ENCODE measurements at regions of chr13 and their contacts with region 1.

Region 1: DNA sequence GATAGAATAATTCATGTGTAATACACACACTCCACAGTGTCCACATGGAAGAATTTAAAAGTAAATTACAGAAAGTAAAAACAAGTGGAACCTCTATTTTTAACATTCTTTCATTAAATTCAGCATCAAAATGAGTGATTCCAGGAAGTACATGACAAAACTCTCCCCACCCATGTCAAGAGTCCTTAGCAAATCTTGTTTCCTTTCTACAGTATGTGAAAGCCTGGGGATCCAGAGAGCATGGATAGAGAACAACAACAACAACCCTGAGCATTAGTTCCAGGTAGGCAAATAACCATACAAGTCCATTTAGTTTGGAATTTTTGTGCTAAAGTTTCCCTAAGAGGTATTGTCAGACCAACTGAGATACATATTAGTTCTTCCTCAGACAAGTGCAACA is 267.9 kb downstream of the ENOX1 start:
- DNase-seq: no peak
- H3K4me3 Mint-ChIP-seq: no peak overlapping the region
- H3K27ac Mint-ChIP-seq: no peak overlapping the region
- H3K4me1 Mint-ChIP-seq: no peaks in the 10 kb centered on the region
- H3K27me3 Mint-ChIP-seq: peaks cover 4% of the 10 kb centered on the region

Region 2: DNA sequence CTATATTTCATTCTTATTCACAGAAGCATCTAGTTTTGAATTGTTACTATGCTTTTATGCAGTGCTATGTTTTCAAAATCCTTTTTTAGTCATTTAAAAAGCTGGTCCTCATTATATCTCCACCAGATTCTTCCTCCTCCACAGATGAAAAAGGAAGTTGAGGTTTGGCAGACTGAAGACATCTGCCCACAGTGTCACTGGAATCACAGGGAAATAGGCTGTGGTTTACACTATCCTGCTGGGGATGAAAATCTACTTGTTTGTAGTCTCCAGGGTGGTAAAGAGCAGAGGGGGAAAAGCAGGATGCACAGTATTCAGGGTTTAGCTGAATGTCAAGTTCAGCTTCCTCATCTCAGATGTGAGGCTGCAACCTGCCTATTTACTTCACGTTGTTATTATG is 144.2 kb before region 1 on chr13:
- intact Hi-C with region 1: no loop called
- DNase-seq: no peak
- H3K4me3 Mint-ChIP-seq: no peak overlapping the region
- H3K27ac Mint-ChIP-seq: no peak overlapping the region
- H3K4me1 Mint-ChIP-seq: peaks cover 2% of the 10 kb centered on the region
- H3K27me3 Mint-ChIP-seq: peaks cover 31% of the 10 kb centered on the region

Region 3: DNA sequence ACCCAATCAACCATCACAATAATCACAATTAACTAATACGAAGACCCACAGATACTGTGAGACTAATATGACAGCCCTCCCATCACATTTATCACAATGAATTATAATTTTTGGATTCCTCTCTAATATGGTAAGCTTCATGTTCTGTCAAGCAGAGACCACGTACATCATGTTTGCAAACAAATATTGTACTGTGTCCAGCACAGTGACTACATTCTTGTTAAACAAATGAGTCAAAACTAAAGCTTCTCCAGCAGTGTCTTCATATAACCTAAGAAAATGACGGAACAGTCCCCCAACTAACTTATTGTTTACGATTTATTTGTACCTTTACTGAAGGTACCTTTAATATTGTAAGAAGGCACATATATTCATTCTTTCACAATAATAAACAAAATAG is 24.6 kb before region 1 on chr13:
- intact Hi-C with region 1: loop called (anchors 1 kb)
- DNase-seq: no peak
- H3K4me3 Mint-ChIP-seq: no peak overlapping the region
- H3K27ac Mint-ChIP-seq: no peak overlapping the region
- H3K4me1 Mint-ChIP-seq: no peaks in the 10 kb centered on the region
- H3K27me3 Mint-ChIP-seq: no peaks in the 10 kb centered on the region

Region 4: GRCh38 chr13:44331912-44332851 is 813.3 kb after region 1 on chr13:
- intact Hi-C with region 1: no loop called
- DNase-seq: no peak
- H3K4me3 Mint-ChIP-seq: no peak overlapping the region
- H3K27ac Mint-ChIP-seq: no peak overlapping the region
- H3K4me1 Mint-ChIP-seq: peaks cover 5% of the 10 kb centered on the region
- H3K27me3 Mint-ChIP-seq: no peaks in the 10 kb centered on the region

Measured in activated T-helper 2 cell treated with anti-CD3 and anti-CD28 coated beads, Interferon-gamma antibody, Interleukin-2, Interleukin-4, amounts not matched to agents 10 μg/mL and 5 μg/mL and 100 μg/mL, durations not matched to agents 14 hours and 24 hours and 36 hours (primary cell).